ENCODE measurements at regions of chr5 and their contacts with region 1.

Region 1: DNA sequence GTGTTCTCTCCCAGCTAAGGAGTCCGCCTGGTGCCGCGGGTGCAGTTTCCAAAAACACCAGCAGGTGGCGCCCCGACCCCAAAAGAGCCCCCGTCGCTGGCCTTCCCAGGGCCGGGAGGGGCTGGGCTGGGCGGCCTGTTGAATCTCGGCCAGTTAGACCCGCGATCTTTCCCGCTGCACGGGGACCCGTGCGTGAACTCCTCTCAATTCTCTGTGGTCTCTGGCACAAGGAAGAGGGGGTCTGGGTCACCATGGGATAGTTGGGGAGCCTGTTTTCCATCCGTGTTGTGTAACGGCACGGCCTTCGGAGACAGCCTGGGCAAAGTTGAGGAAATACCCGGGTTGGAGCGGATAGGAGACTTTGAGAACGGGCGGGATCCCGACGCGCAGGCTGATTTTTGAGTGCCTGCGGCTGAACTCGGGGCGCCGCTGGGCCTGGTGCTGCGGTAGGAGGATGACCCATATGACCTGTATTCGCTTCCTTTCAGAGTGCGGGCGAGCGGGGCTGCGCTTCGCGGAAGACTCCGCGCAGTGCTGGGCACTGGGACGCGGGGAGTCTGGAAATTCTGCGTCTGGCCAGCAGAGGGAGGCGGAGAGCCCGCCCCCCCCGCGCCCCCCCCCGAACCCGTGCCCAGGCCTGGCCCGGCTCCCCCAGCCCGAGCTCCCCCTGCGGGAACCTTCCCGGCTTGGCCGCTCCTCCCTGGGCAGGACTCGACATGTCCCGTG is 7.9 kb upstream of the PSD2 start:
- DNase-seq: no peak
- H3K4me3 ChIP-seq: peak overlapping the region; percentile 41 to 74 (median 58)
- H3K27ac ChIP-seq: peak overlapping the region; percentile 15 to 73 (median 70)
- H3K4me1 ChIP-seq: peaks cover 4 to 19% (median 4%) of the 10 kb centered on the region in 3 donors
- H3K27me3 ChIP-seq: peaks cover 0 to 21% (median 0%) of the 10 kb centered on the region in 4 donors
- CTCF ChIP-seq: peak; percentile 80 to 99 (median 98)
- POLR2A ChIP-seq: no peak

Region 2: GRCh38 chr5:139863855-139864558 is 76.3 kb after region 1 on chr5:
- intact Hi-C with region 1: loop called (anchors 5 kb)
- DNase-seq: no peak
- H3K4me3 ChIP-seq: no peak overlapping the region
- H3K27ac ChIP-seq: peak overlapping the region; percentile 23 to 43 (median 30)
- H3K4me1 ChIP-seq: peaks cover 9 to 33% (median 16%) of the 10 kb centered on the region in 3 donors
- H3K27me3 ChIP-seq: no peaks in the 10 kb centered on the region
- CTCF ChIP-seq: peak; percentile 76 to 96 (median 90)
- POLR2A ChIP-seq: no peak

Region 3: GRCh38 chr5:139968547-139969261 is 181.0 kb after region 1 on chr5:
- intact Hi-C with region 1: loop called (anchors 2 kb)
- DNase-seq: peak; percentile 10
- H3K4me3 ChIP-seq: no peak overlapping the region
- H3K27ac ChIP-seq: no peak overlapping the region
- H3K4me1 ChIP-seq: peaks cover 4 to 14% (median 4%) of the 10 kb centered on the region in 3 donors
- H3K27me3 ChIP-seq: no peaks in the 10 kb centered on the region
- CTCF ChIP-seq: peak; percentile 98 to 100 (median 100)
- POLR2A ChIP-seq: no peak

Region 4: GRCh38 chr5:140060816-140061215 is 273.1 kb after region 1 on chr5:
- intact Hi-C with region 1: loop called (anchors 10 kb)
- DNase-seq: no peak
- H3K4me3 ChIP-seq: no peak overlapping the region
- H3K27ac ChIP-seq: no peak overlapping the region
- H3K4me1 ChIP-seq: no peaks in the 10 kb centered on the region
- H3K27me3 ChIP-seq: peaks cover 0 to 67% (median 2%) of the 10 kb centered on the region in 4 donors
- CTCF ChIP-seq: no peak
- POLR2A ChIP-seq: no peak

Measured in esophagus squamous epithelium (tissue), 5 donors.